Activated T-helper 1 cell treated with anti-CD3 and anti-CD28 coated beads, Interleukin-12 subunit alpha, Interleukin-12 subunit beta, Interleukin-2, Interleukin-4 antibody, amounts not matched to agents 30 ng/mL and 10 ng/mL and 1 ng/mL, durations not matched to agents 14 hours and 24 hours and 36 hours (primary cell): ENCODE measurements at regions of chr1 and their contacts with region 1.

Region 1: GRCh38 chr1:51878616-51879336 is at the start of gene NRDC:
- DNase-seq: peak; percentile 99
- H3K4me3 Mint-ChIP-seq: no peak within 1 kb of the TSS
- H3K27ac Mint-ChIP-seq: no peak within 1 kb of the TSS
- H3K4me1 Mint-ChIP-seq: no peaks in the 10 kb centered on the region
- H3K27me3 Mint-ChIP-seq: peaks cover 14% of the 10 kb centered on the region
- total RNA-seq, gene NRDC: 177 and 185 TPM in 2 replicates

Region 2: GRCh38 chr1:51235673-51236530 is 642.9 kb before region 1 on chr1 and contains the start of gene RNF11:
- intact Hi-C with region 1: loop called (anchors 2 kb)
- DNase-seq: peak; percentile 90
- H3K4me3 Mint-ChIP-seq: peak within 1 kb of the TSS; percentile 96
- H3K27ac Mint-ChIP-seq: peak within 1 kb of the TSS; percentile 88
- H3K4me1 Mint-ChIP-seq: peaks cover 13% of the 10 kb centered on the region
- H3K27me3 Mint-ChIP-seq: peaks cover 2% of the 10 kb centered on the region
- total RNA-seq, gene RNF11: 28.4 and 29.6 TPM in 2 replicates

Region 3: DNA sequence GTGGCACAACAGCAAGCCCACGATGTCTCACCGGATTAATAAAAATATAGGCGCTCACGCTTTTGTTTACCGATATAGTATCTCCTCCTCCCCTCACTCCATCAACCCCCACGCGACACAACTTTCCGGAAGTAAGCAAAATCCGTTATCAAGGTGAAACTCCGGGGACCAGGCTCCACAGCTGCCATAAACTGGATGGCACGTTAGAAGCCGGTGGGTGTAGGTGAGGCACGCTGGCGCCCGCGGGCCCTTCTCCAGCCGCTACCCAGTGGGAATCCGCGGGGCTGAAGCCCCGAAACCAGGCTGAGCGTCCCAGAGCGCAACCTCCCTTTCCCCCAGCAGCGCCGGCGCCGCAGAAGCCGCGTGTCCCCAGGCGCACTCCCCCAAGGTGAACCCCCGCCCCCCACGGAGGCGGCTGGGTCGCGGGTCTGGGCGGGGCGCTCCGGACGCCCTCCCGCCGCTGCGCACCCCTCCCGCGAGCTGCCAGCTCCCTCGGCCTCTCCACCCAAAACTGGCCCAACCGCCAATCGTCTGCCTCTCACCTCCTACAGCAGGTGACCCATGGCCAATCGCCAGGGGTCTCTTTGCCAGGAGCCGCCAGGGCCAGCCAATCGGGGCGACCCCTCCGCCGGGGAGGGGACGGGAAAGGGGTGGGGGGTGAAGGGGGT is 149.5 kb before region 1 on chr1:
- intact Hi-C with region 1: loop called (anchors 1 kb)
- DNase-seq: peak; percentile 94
- H3K4me3 Mint-ChIP-seq: peak overlapping the region; percentile 84
- H3K27ac Mint-ChIP-seq: peak overlapping the region; percentile 88
- H3K4me1 Mint-ChIP-seq: peaks cover 24% of the 10 kb centered on the region
- H3K27me3 Mint-ChIP-seq: no peaks in the 10 kb centered on the region

Region 4: GRCh38 chr1:52033190-52034049 is 154.6 kb after region 1 on chr1 and contains the start of gene KTI12:
- intact Hi-C with region 1: loop called (anchors 1 kb)
- DNase-seq: peak; percentile 84
- H3K4me3 Mint-ChIP-seq: peak within 1 kb of the TSS; percentile 93
- H3K27ac Mint-ChIP-seq: peak within 1 kb of the TSS; percentile 89
- H3K4me1 Mint-ChIP-seq: peaks cover 39% of the 10 kb centered on the region
- H3K27me3 Mint-ChIP-seq: no peaks in the 10 kb centered on the region
- total RNA-seq, gene KTI12: 21.6 and 22.4 TPM in 2 replicates

Region 5: DNA sequence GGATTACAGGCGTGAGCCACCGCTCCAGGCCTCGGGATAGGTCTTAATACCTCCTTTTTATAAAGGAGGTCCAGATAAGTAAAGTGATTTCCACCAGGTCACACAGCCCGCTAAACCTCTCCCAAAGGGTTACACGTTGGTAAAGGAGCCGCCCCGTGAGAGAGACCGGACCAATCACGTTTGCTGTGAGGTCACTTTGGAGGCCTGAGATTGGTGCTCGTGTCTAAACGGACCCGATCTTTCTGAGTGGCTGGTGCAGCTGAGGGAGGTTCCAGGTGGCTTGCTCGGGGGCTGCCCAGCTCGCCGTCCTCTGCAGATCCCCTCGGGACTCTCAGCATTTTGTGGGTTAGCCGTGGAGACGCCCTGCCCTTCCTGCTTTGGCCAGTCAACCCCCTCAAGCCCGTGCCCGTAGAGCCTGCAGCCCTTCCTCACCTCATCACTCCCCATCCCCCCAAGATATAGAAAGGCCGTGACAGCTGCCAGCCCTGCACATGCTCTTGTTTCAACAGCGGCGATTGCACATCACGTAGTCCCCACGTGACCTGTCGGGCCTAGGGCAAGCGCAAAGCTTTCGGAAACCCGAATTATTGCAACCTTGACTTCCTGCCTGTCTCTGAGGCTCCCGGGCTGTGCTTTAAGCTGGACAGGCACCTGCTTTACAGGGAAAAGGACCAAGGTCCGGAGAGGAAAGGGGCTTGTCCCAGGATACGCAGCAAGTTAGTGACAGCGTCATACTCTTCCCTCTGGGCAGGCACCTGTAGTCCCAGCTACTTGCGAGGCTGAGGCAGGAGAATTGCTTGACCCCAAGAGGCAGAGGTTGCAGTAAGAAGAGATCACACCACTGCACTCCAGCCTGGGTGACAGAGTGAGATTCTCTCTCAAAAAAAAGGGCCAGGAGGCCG is 824.4 kb after region 1 on chr1:
- intact Hi-C with region 1: loop called (anchors 2 kb)
- DNase-seq: peak; percentile 80
- H3K4me3 Mint-ChIP-seq: peak overlapping the region; percentile 82
- H3K27ac Mint-ChIP-seq: peak overlapping the region; percentile 88
- H3K4me1 Mint-ChIP-seq: peaks cover 32% of the 10 kb centered on the region
- H3K27me3 Mint-ChIP-seq: peaks cover 4% of the 10 kb centered on the region